H1 (cell line): ENCODE measurements at regions of chr19 and their contacts with region 1.

Region 1: DNA sequence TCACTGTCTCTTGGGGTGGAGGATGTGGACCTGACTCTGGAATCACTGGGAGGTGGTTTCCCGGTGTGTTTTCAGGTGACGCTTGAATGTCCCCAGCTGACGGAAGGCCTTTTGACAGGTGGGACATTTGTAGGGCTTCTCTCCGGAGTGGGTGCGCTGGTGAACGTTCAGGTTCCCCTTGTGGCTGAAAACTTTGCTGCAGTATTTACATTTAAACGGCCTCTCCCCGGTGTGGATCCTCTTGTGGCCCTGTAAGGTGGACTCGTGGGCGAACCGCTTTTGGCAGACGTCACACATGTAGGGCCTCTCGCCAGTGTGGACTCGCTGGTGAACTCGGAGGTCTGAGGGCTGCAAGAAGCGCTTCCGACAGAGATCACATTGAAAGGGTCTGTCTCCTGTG is 7.8 kb downstream of the ZSCAN5B start:
- DNase-seq: no peak
- H3K4me3 ChIP-seq: no peak overlapping the region
- H3K27ac ChIP-seq: no peak overlapping the region
- H3K4me1 ChIP-seq: no peaks in the 10 kb centered on the region
- H3K27me3 ChIP-seq: no peaks in the 10 kb centered on the region
- CTCF ChIP-seq: peak in 1 of 3 experiments; percentile 20; a peak in 1 of 4 replicates
- EP300 ChIP-seq: no peak
- POLR2A ChIP-seq: no peak
- RAD21 ChIP-seq: 0 out of 4 replicates have a peak, but pooled peaks of 1 of the 2 experiments have one; percentile 1

Region 2: GRCh38 chr19:56090931-56091490 is 98.8 kb before region 1 on chr19:
- CTCF ChIA-PET with region 1: no interaction called
- POLR2A ChIA-PET with region 1: no interaction called
- DNase-seq: no peak
- H3K4me3 ChIP-seq: no peak overlapping the region
- H3K27ac ChIP-seq: no peak overlapping the region
- H3K4me1 ChIP-seq: peaks cover 0 to 5% (median 0%) of the 10 kb centered on the region in 4 experiments; a peak in 1 of 7 replicates
- H3K27me3 ChIP-seq: no peaks in the 10 kb centered on the region
- CTCF ChIP-seq: no peak
- EP300 ChIP-seq: no peak
- POLR2A ChIP-seq: no peak
- RAD21 ChIP-seq: no peak

Region 3: DNA sequence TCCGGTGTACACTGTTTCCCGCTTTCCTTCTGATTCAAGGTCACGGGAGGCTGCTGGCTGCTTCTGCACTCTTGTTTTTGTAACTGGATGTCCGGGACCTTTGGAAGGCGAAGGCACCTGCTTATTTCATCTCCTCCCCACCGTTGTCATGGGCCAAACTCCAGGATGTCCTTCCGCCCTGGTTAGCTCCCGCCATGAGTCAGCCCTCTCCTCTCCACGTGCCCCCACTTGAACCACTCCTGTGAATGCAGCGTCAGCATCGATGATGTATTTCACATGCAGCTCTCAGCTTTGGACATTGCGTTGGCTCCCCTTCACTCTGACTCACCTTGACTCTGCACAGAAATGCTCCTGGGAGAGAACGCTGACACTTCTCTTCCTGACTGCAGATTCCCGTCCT is 19.5 kb before region 1 on chr19:
- CTCF ChIA-PET with region 1: interaction called, 38 read pairs
- POLR2A ChIA-PET with region 1: interaction called, 3 read pairs
- DNase-seq: no peak
- H3K4me3 ChIP-seq: no peak overlapping the region
- H3K27ac ChIP-seq: no peak overlapping the region
- H3K4me1 ChIP-seq: no peaks in the 10 kb centered on the region
- H3K27me3 ChIP-seq: no peaks in the 10 kb centered on the region
- CTCF ChIP-seq: no peak
- EP300 ChIP-seq: no peak
- POLR2A ChIP-seq: no peak
- RAD21 ChIP-seq: no peak

Region 4: GRCh38 chr19:56176881-56177280 is 12.9 kb before region 1 on chr19:
- CTCF ChIA-PET with region 1: interaction called, 38 read pairs
- POLR2A ChIA-PET with region 1: interaction called, 3 read pairs
- DNase-seq: no peak
- H3K4me3 ChIP-seq: no peak overlapping the region
- H3K27ac ChIP-seq: no peak overlapping the region
- H3K4me1 ChIP-seq: peaks cover 0 to 3% (median 0%) of the 10 kb centered on the region in 4 experiments; a peak in 1 of 7 replicates
- H3K27me3 ChIP-seq: no peaks in the 10 kb centered on the region; a peak in 1 of 7 replicates
- CTCF ChIP-seq: no peak
- EP300 ChIP-seq: no peak
- POLR2A ChIP-seq: no peak
- RAD21 ChIP-seq: no peak

Region 5: DNA sequence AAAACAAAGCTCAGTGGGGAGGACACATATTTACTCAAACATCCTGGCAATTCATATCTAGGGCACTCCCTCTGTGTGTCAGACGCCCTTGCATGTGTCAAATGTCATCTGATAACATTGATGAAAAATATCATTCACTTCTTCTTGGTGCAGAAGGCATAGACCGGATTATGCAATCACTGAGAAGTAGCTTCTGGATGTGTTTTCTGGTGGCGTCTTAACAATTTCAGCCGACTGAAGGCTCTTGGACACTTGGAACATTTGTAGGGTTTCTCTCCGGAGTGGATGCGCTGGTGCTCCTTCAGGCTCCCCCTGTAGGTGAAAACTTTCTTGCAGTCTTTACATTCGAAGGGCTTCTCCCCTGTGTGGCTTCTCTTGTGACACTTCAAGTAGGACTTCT is 31.6 kb after region 1 on chr19:
- CTCF ChIA-PET with region 1: interaction called, 15 read pairs
- POLR2A ChIA-PET with region 1: no interaction called
- DNase-seq: no peak
- H3K4me3 ChIP-seq: no peak overlapping the region
- H3K27ac ChIP-seq: no peak overlapping the region
- H3K4me1 ChIP-seq: peaks cover 0 to 8% (median 4%) of the 10 kb centered on the region in 4 experiments; a peak in 6 of 7 replicates
- H3K27me3 ChIP-seq: no peaks in the 10 kb centered on the region; a peak in 1 of 7 replicates
- CTCF ChIP-seq: peak; percentile 22 to 50 (median 42)
- EP300 ChIP-seq: no peak
- POLR2A ChIP-seq: no peak
- RAD21 ChIP-seq: peak in 1 of 2 experiments; percentile 40; a peak in 3 of 4 replicates

Region 6: GRCh38 chr19:56291867-56292266 is 102.1 kb after region 1 on chr19:
- CTCF ChIA-PET with region 1: no interaction called
- POLR2A ChIA-PET with region 1: no interaction called
- DNase-seq: no peak
- H3K4me3 ChIP-seq: no peak overlapping the region
- H3K27ac ChIP-seq: no peak overlapping the region
- H3K4me1 ChIP-seq: no peaks in the 10 kb centered on the region; a peak in 1 of 7 replicates
- H3K27me3 ChIP-seq: no peaks in the 10 kb centered on the region
- CTCF ChIP-seq: no peak
- EP300 ChIP-seq: no peak
- POLR2A ChIP-seq: no peak
- RAD21 ChIP-seq: no peak